Transverse colon (tissue), 4 donors: ENCODE measurements at regions of chr1 and their contacts with region 1.

Region 1: DNA sequence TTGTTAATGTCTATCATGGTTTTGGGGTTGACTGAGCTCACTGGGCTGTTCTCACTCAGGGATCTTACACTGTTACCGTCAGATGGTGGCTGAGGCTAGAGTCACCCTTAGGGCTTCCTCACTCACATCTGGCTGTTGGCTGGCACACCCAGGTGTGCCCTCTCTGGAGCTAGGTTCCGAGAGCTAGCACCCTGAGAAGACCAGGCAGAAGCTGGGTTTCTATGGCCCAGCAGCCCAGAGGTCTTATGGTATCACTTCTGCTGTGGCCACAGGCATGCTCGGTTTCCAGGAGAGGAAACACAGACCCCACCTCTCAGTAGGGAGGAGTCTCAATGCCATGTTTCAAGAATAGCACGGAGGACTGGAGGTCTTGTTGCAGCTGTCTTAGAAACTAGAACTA is 20.7 kb upstream of the KIF1B start:
- DNase-seq: peak; percentile 59
- H3K4me3 ChIP-seq: no peak overlapping the region
- H3K27ac ChIP-seq: no peak overlapping the region
- H3K4me1 ChIP-seq: peaks cover 0 to 3% (median 0%) of the 10 kb centered on the region in 4 donors
- H3K27me3 ChIP-seq: no peaks in the 10 kb centered on the region
- CTCF ChIP-seq: no peak
- EP300 ChIP-seq: no peak
- POLR2A ChIP-seq: no peak

Region 2: DNA sequence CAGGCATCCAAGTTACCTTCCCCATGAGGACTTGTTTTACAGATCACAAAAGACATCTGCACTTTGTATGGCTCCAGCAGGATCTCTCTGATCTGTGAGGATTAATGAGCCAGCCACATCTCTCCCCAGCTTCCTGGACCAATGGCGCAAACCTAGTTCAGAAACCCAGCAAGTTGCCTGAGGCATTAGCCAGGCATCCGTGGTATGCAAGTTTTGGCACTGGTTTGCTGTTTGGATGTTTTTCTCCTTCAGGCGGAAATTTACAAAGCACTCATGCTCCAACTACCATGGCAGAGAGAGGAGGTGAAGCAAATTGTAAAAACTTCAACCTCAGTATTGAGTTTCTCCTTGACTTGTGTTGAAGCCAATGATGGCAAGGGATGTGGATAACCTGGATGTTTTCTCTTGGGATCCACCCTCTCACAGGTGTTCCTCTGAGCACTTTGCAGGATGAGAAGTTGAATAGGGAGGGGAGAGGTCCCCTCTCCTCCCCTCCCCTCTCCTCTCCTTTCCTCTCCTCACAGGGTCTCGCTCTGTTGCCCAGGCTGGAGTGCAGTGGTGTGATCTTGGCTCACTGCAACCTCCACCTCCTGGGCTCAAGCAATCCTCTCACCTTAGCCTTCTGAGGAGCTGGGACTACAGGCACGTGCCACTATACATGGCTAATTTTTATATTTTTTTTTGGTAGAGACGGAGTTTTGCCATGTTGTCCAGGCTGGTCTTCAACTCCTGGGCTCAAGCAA is 1285.6 kb before region 1 on chr1:
- in situ Hi-C with region 1: no loop called
- intact Hi-C with region 1: loop called (anchors 5 kb)
- DNase-seq: peak; percentile 21
- H3K4me3 ChIP-seq: no peak overlapping the region
- H3K27ac ChIP-seq: peak overlapping the region in 1 of 4 donors; percentile 15
- H3K4me1 ChIP-seq: peaks cover 0 to 5% (median 0%) of the 10 kb centered on the region in 4 donors
- H3K27me3 ChIP-seq: no peaks in the 10 kb centered on the region
- CTCF ChIP-seq: no peak
- EP300 ChIP-seq: no peak
- POLR2A ChIP-seq: no peak

Region 3: DNA sequence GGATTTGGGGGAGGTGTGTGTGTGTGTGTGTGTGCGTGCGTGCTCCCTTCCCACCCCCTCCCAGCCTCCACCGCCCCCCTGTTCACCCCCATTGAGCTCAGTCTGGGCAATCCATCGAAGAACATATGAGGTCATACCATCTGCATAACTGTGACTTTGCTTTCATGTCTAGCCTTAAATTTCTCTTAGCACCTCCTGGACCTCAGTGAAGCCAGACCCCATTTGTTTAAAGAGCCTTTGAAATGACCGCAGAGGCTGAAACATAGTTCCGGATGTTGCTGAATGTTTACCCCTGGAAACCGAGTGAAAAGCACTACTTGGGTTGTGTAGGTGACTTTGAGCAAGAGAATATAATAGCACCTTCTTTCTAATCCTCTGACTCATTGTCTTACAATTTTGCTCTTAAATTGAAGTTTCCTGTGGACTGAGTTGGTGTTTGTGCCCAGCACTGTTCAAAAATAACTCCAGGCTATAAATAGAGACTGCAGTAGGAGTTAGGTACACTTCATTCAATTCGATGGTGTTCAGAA is 81.5 kb before region 1 on chr1:
- in situ Hi-C with region 1: no loop called
- intact Hi-C with region 1: no loop called
- DNase-seq: no peak
- H3K4me3 ChIP-seq: no peak overlapping the region
- H3K27ac ChIP-seq: peak overlapping the region; percentile 33 to 76 (median 74)
- H3K4me1 ChIP-seq: peaks cover 0 to 28% (median 17%) of the 10 kb centered on the region in 4 donors
- H3K27me3 ChIP-seq: no peaks in the 10 kb centered on the region
- CTCF ChIP-seq: no peak
- EP300 ChIP-seq: no peak
- POLR2A ChIP-seq: no peak

Region 4: DNA sequence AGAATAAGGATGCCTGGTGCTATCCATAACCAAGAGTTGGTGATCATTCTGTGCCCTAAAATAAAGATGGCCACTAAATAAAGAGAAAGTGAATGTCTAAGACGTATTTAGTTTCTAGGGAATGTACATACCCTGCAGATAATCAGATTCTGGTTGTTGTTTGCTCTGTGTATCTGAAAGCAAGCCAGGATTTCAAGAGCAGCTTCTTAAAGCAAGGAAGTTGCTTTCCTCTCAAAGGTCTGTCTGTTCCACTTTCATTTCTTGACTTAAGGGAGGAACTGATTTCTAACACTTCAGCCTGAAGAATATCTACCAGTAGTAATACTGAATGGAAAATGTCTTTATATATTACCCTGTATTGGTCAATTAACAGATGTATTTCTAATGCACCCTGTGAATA is 109.5 kb after region 1 on chr1:
- in situ Hi-C with region 1: no loop called
- intact Hi-C with region 1: no loop called
- DNase-seq: no peak
- H3K4me3 ChIP-seq: no peak overlapping the region
- H3K27ac ChIP-seq: no peak overlapping the region
- H3K4me1 ChIP-seq: peaks cover 0 to 4% (median 0%) of the 10 kb centered on the region in 4 donors
- H3K27me3 ChIP-seq: no peaks in the 10 kb centered on the region
- CTCF ChIP-seq: no peak
- EP300 ChIP-seq: no peak
- POLR2A ChIP-seq: no peak